Activated CD4-positive, alpha-beta T cell treated with anti-CD3 and anti-CD28 coated beads for 36 hours (primary cell): ENCODE measurements at regions of chr13 and their contacts with region 1.

Region 1: DNA sequence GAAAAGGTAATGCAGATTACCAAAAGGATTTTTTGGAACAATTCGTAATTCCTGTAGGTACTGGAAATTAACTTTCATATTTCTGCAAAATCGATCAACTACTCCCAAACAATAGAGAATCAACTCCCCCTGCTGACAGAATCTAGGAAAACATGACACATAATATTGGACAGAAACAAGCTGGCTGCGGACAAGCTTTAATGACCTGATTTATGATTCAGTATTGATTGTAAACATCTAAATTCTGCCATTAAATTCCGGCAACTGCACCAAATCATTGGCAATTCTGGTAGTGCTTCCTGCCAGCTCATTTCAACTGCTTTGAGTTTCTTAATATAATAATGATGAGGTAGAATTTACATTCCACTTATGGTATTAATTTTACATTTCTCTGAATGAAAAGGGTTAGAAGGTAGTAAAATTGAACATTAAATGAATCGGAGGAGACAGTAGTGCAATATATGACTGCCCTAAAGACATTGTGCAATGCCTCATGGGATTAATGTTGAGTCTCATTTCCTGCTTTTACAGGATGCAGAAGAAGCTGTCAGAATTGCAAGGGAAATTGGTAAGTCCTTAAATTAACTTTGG is 146.5 kb downstream of the PCCA start:
- DNase-seq: no peak
- ATAC-seq: no peak
- H3K4me3 Mint-ChIP-seq: no peak overlapping the region
- H3K27ac Mint-ChIP-seq: no peak overlapping the region
- H3K4me1 Mint-ChIP-seq: peaks cover 3% of the 10 kb centered on the region
- H3K27me3 Mint-ChIP-seq: no peaks in the 10 kb centered on the region

Region 2: GRCh38 chr13:99900960-99901359 is 334.4 kb before region 1 on chr13:
- CTCF ChIA-PET with region 1: interaction called, 8 read pairs
- POLR2A ChIA-PET with region 1: no interaction called
- intact Hi-C with region 1: loop called in 1 of 2 experiments (anchors 1 kb)
- DNase-seq: no peak
- ATAC-seq: no peak
- H3K4me3 Mint-ChIP-seq: no peak overlapping the region
- H3K27ac Mint-ChIP-seq: no peak overlapping the region
- H3K4me1 Mint-ChIP-seq: no peaks in the 10 kb centered on the region
- H3K27me3 Mint-ChIP-seq: peaks cover 49% of the 10 kb centered on the region

Region 3: GRCh38 chr13:99916366-99917103 is 318.9 kb before region 1 on chr13:
- CTCF ChIA-PET with region 1: interaction called, 5 read pairs
- POLR2A ChIA-PET with region 1: interaction called, 3 read pairs
- intact Hi-C with region 1: loop called (anchors 1 to 2 kb)
- DNase-seq: peak; percentile 21
- ATAC-seq: peak; percentile 83
- H3K4me3 Mint-ChIP-seq: no peak overlapping the region
- H3K27ac Mint-ChIP-seq: no peak overlapping the region
- H3K4me1 Mint-ChIP-seq: peaks cover 8% of the 10 kb centered on the region
- H3K27me3 Mint-ChIP-seq: peaks cover 10% of the 10 kb centered on the region

Region 4: DNA sequence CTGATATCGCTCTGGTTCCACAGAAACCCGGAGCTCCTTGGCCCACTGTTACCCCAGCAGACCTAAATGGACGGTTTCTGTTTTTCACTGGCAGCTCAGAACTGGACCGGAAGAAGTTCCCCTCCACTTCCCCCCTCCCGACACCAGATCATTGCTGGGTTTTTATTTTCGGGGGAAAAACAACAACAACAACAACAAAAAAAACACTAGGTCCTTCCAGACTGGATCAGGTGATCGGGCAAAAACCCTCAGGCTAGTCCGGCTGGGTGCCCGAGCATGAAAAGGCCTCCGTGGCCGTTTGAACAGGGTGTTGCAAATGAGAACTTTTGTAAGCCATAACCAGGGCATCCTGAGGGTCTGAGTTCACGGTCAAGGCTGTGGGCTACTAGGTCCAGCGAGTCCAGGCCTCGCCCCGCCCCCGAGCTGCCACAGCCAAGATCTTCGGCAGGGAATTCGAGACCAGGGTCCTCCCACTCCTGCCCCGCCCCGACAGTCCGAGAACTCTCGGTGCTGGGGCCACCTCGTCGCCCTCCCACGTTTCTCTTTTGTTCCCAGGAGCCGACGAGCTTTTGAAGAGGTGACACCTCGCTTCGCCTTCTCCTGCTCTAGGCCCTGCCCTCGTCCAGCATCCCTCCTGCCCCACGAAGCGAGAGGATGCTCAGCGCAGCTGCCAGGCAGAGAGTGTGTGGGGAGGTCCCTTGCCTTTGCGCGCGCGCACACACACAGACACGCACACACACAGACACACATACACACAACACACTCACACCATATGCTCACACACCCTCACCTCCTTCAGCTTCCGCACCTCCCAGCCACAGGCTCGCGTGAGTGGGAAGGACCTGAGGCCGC is 245.1 kb before region 1 on chr13:
- CTCF ChIA-PET with region 1: no interaction called
- POLR2A ChIA-PET with region 1: no interaction called
- intact Hi-C with region 1: loop called (anchors 5 to 10 kb)
- DNase-seq: peak; percentile 31
- ATAC-seq: peak; percentile 73
- H3K4me3 Mint-ChIP-seq: peak overlapping the region; percentile 6
- H3K27ac Mint-ChIP-seq: no peak overlapping the region
- H3K4me1 Mint-ChIP-seq: peaks cover 27% of the 10 kb centered on the region
- H3K27me3 Mint-ChIP-seq: peaks cover 86% of the 10 kb centered on the region